PC-3 (cell line): ENCODE measurements at regions of chr11 and their contacts with region 1.

Region 1: DNA sequence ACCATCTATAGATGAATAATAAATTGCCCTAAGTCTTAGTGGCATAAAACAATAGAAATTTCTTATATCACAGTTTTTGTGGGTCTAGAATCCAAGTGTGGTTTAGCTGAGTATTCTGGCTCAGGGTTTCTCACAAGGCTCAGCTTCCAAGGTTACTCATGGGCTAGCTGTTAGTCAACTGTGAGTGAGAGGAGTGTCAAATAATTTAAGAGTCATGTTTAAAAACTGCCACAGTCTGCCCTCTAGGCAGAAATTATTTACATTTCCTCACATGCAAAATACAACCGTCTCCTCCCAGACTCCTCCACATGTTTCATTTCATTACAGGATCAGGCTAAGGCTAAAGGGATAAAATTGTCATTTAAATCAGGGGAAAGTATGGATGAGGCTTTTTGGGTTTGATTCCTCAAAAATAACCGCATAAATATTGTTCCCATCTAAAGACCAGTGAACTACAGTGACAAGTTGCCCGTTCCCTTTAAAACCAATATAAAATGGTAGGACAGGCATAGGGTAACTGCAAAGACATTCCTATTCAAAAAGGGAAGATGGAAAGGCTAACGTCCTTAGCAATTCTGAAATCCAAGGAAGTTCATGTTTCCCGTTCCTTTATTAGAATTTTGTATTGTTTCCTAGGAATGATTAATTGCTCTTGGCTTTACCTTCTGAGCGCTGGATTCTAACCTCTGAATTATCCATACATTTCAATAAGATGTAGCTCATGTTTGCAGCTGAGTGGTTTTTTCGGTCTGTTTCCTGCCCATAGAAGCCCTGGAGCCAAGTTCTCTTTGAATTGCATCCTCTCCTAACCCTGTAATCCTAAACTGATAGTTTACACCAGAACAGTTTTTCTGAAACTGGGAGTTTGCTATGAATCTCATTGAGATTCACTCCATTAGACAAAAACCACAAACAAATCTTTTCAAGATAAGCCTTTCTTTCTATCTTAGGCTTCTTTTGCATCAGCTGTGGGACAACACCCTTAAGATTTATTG is 324.5 kb downstream of the DYNC2H1 start:
- DNase-seq: peak; percentile 96
- ATAC-seq: peak; percentile 99
- H3K4me3 ChIP-seq: no peak overlapping the region
- H3K27ac ChIP-seq: peak overlapping the region; percentile 66
- H3K4me1 ChIP-seq: peaks cover 21% of the 10 kb centered on the region
- H3K27me3 ChIP-seq: no peaks in the 10 kb centered on the region
- CTCF ChIP-seq: peak; percentile 36; the same call in 1 of the 2 replicates

Region 2: DNA sequence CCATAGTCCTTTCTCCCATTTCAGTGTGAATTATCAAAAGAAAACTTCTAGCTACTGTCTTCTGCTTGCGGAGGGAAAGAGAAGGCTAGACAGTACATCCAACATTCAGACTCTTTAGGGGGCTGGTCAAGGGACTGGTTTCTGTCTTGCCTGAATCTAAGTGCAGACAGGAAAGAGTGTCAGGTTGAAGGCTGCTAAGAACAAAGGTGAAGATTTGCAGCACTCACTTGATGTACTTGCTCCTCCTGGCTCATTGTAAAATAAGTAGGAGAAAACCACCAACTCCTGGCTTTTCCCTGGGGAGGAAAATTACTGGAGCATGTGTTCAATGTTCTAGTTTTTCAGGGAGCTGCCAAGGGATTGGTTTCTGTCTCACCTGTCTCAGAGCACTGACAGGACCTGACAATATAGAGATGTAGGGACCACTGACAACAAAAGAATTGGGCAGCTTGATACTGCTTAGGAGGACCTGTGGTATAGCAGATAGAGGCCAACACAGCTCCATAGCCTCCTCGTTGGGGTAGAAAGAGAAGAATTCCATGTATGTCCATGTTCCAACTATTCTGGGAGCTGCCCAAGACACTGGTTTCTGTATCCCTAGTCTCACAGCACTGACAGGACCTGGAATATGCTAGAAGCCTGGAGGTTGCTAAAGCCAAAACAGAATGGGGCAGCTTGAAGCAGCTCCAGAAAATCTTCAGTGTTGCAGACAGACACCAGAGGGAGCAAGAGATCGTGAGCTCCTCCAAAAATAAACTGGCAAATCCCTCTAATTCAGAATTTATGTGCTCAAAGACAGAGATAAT is 519.2 kb before region 1 on chr11:
- CTCF ChIA-PET with region 1: no interaction called
- POLR2A ChIA-PET with region 1: no interaction called
- intact Hi-C with region 1: no loop called
- DNase-seq: peak; percentile 76
- ATAC-seq: peak; percentile 86
- H3K4me3 ChIP-seq: no peak overlapping the region
- H3K27ac ChIP-seq: no peak overlapping the region
- H3K4me1 ChIP-seq: peaks cover 15% of the 10 kb centered on the region
- H3K27me3 ChIP-seq: no peaks in the 10 kb centered on the region
- CTCF ChIP-seq: peak; percentile 93

Region 3: DNA sequence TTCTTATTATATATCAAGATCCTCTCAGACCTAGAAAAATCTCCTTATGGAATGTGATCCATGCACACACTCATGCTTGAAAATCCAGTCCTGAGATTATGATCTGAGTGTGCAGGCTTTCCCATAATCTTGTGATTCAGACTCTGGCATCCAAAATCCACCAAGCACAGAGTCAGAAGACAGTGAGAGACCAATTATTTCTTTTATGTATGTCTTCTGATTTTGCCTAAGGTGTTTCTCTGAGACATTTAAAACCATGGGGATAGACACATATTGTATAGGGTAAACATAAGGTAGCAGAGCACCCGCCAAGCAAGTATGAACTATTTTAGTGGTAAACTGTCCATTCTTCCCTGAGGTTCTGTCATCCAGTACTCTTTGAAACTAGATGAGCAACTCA is 426.1 kb before region 1 on chr11:
- CTCF ChIA-PET with region 1: interaction called, 13 read pairs
- POLR2A ChIA-PET with region 1: no interaction called
- intact Hi-C with region 1: no loop called
- DNase-seq: peak; percentile 68
- ATAC-seq: no peak
- H3K4me3 ChIP-seq: no peak overlapping the region
- H3K27ac ChIP-seq: no peak overlapping the region
- H3K4me1 ChIP-seq: peaks cover 3% of the 10 kb centered on the region; the same call in 1 of the 2 replicates
- H3K27me3 ChIP-seq: no peaks in the 10 kb centered on the region
- CTCF ChIP-seq: no peak

Region 4: GRCh38 chr11:103384652-103385051 is 49.0 kb before region 1 on chr11:
- CTCF ChIA-PET with region 1: no interaction called
- POLR2A ChIA-PET with region 1: no interaction called
- intact Hi-C with region 1: no loop called
- DNase-seq: no peak
- ATAC-seq: no peak
- H3K4me3 ChIP-seq: no peak overlapping the region
- H3K27ac ChIP-seq: no peak overlapping the region
- H3K4me1 ChIP-seq: no peaks in the 10 kb centered on the region
- H3K27me3 ChIP-seq: no peaks in the 10 kb centered on the region
- CTCF ChIP-seq: no peak

Region 5: GRCh38 chr11:103471546-103471945 is 37.9 kb after region 1 on chr11:
- CTCF ChIA-PET with region 1: no interaction called
- POLR2A ChIA-PET with region 1: no interaction called
- intact Hi-C with region 1: no loop called
- DNase-seq: no peak
- ATAC-seq: no peak
- H3K4me3 ChIP-seq: no peak overlapping the region
- H3K27ac ChIP-seq: no peak overlapping the region
- H3K4me1 ChIP-seq: no peaks in the 10 kb centered on the region
- H3K27me3 ChIP-seq: no peaks in the 10 kb centered on the region
- CTCF ChIP-seq: no peak